ENCODE measurements at regions of chr5 and their contacts with region 1.

Region 1: DNA sequence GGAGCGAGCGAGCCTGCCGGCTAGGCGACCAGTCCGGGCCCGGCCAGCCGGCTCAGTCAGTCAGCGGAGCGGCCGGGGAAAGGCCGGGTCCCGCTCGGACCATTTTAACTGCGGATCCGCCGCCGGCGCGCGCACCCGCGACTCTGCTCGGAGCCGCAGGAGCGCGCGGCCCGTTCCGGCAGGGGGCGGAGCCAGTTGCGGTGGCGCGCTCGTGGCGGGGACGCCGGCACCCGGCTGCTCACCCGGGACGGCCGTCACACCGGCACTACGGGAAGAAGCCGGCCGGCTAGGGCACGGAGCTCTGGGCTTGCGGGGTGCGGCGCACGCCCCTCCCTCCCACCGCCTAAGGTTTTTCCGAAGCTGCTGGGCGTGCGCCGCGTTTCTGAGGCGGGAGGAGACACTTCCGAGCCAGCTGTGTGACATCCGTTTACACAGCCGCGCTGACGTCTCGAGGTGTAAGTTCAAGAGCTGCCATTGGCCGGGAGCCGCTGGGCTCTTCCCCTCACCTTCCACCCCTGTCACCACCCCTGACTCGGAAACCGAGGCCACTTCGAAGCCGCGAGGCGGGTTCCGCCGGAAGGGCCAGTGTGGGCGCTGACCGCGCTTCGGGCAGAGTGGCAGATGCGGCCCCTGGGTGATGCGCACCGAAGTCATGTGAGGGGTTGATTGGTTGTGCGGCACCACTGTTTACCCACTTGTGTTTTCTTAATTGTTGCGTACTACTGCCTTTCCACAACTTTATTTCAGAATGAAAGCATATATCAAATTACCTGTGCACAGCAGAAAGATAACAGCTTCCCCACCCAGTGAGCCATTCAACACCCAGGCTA is at the start of gene FBXL17:
- DNase-seq: peak; percentile 95 to 96
- H3K4me3 ChIP-seq: peak within 1 kb of the TSS; percentile 100
- H3K4me3 Mint-ChIP-seq: peak within 1 kb of the TSS; percentile 72
- H3K27ac Mint-ChIP-seq: peak within 1 kb of the TSS; percentile 67
- H3K4me1 ChIP-seq: peaks cover 5% of the 10 kb centered on the region; the same call in 1 of the 2 replicates
- H3K4me1 Mint-ChIP-seq: peaks cover 20% of the 10 kb centered on the region
- H3K27me3 ChIP-seq: no peaks in the 10 kb centered on the region
- H3K27me3 Mint-ChIP-seq: no peaks in the 10 kb centered on the region
- CTCF ChIP-seq: no peak
- total RNA-seq, gene FBXL17: 11.6 and 12.5 TPM in 2 replicates

Region 2: GRCh38 chr5:108361239-108361638 is 20.9 kb before region 1 on chr5:
- CTCF ChIA-PET with region 1: no interaction called
- POLR2A ChIA-PET with region 1: no interaction called
- intact Hi-C with region 1: no loop called
- DNase-seq: no peak
- H3K4me3 ChIP-seq: no peak overlapping the region
- H3K4me3 Mint-ChIP-seq: no peak overlapping the region
- H3K27ac Mint-ChIP-seq: no peak overlapping the region
- H3K4me1 ChIP-seq: no peaks in the 10 kb centered on the region
- H3K4me1 Mint-ChIP-seq: peaks cover 11% of the 10 kb centered on the region
- H3K27me3 ChIP-seq: no peaks in the 10 kb centered on the region
- H3K27me3 Mint-ChIP-seq: no peaks in the 10 kb centered on the region
- CTCF ChIP-seq: no peak

Region 3: GRCh38 chr5:108417166-108417684 is 35.1 kb after region 1 on chr5:
- CTCF ChIA-PET with region 1: interaction called, 6 read pairs
- POLR2A ChIA-PET with region 1: interaction called, 3 read pairs
- intact Hi-C with region 1: loop called (anchors 1 kb)
- DNase-seq: peak in 1 of 2 experiments; percentile 65
- H3K4me3 ChIP-seq: no peak overlapping the region
- H3K4me3 Mint-ChIP-seq: no peak overlapping the region
- H3K27ac Mint-ChIP-seq: peak overlapping the region; percentile 46
- H3K4me1 ChIP-seq: peaks cover 29% of the 10 kb centered on the region
- H3K4me1 Mint-ChIP-seq: peaks cover 43% of the 10 kb centered on the region
- H3K27me3 ChIP-seq: no peaks in the 10 kb centered on the region
- H3K27me3 Mint-ChIP-seq: no peaks in the 10 kb centered on the region
- CTCF ChIP-seq: no peak

Region 4: DNA sequence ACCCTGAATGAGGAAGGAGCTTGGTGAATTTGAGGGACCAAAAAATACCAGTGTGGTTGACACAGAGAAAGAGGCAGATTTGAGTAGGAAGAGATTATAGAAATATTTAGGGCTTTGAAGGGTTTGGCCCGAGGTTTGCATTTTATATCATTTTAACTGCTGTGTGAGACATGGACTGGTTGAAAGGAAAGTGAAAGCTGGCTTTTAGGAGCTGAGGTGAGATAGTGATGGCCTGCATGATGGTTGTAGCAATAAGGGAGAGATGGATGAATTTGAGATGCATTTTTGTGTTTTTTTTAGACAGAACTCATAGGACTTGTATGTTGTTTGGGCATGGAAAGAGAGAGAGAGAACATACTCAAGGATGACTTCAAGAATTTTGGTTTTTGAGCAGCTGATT is 387.2 kb after region 1 on chr5:
- CTCF ChIA-PET with region 1: no interaction called
- POLR2A ChIA-PET with region 1: no interaction called
- intact Hi-C with region 1: no loop called
- DNase-seq: no peak
- H3K4me3 ChIP-seq: no peak overlapping the region
- H3K4me3 Mint-ChIP-seq: no peak overlapping the region
- H3K27ac Mint-ChIP-seq: no peak overlapping the region
- H3K4me1 ChIP-seq: 0 out of 2 replicates have a peak, but pooled peaks cover 7% of the 10 kb centered on the region
- H3K4me1 Mint-ChIP-seq: peaks cover 14% of the 10 kb centered on the region
- H3K27me3 ChIP-seq: no peaks in the 10 kb centered on the region
- H3K27me3 Mint-ChIP-seq: no peaks in the 10 kb centered on the region
- CTCF ChIP-seq: no peak

Region 5: DNA sequence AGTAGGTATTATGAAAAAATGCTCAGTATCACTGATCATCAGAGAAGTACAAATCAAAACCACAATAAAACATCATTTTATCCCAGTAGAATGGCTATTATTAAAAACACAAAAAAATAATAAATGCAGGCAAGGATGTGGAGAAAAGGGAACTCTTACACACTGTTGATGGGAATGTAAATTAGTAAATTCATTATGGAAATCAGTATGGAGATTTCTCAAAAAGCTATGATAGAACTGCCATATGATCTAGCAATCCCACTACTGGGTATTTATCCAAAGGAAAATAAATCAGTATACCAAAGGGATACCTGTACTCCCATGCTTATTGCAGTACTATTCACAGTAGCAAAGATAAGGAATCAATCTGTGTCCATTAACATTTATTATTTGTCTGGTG is 575.2 kb after region 1 on chr5:
- CTCF ChIA-PET with region 1: no interaction called
- POLR2A ChIA-PET with region 1: interaction called, 16 read pairs
- intact Hi-C with region 1: no loop called
- DNase-seq: no peak
- H3K4me3 ChIP-seq: no peak overlapping the region
- H3K4me3 Mint-ChIP-seq: no peak overlapping the region
- H3K27ac Mint-ChIP-seq: no peak overlapping the region
- H3K4me1 ChIP-seq: no peaks in the 10 kb centered on the region
- H3K4me1 Mint-ChIP-seq: peaks cover 6% of the 10 kb centered on the region
- H3K27me3 ChIP-seq: no peaks in the 10 kb centered on the region
- H3K27me3 Mint-ChIP-seq: no peaks in the 10 kb centered on the region
- CTCF ChIP-seq: no peak

Measured in Caco-2 (cell line).